A673 (cell line): ENCODE measurements at regions of chr16 and their contacts with region 1.

Region 1: DNA sequence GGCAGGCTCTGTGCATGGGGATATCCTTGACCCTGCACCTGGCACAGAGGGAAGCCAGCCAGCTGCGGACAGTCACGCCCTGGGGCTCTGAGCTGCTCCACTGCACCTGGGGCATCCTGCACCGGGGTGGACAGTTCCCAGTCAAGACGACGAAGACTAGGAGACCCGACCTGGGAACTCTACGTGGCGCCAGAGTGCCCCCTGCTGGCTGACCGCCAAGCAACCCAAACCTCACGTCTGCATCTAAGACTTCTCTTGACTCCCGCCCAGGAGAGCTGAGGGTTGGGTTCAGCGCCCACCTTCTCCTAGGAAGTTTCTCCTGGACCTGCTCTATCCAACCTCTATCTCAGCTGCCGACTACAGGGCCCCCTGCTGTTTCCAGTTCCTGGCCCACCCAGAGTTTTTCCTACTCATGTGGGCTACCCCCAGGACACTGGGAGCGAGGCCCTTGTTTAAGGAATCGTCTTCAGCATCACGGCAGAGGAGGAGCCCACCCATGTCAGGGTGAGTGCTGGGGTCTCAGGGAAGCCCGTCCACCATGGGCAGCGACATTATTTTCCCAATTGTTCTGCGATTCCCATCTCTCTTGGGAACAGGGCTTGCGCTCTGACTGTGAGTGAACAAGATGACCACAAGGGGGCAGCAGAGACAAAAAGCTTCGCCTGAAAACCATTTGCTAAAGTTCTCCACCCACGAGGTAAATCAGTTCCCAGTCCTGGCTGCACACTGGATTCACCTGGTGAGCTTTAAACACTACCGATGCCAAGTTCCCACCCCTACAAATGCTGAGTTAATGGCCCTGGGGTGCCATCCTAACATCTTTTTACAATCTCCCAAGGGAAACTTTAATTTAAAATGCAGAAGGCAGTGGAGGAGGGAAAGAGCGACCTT is 29.3 kb downstream of the TLE7 start:
- DNase-seq: peak; percentile 83
- H3K4me3 ChIP-seq: no peak overlapping the region
- H3K27ac ChIP-seq: no peak overlapping the region
- H3K4me1 ChIP-seq: no peaks in the 10 kb centered on the region
- H3K27me3 ChIP-seq: peaks cover 44% of the 10 kb centered on the region
- CTCF ChIP-seq: peak; percentile 84

Region 2: GRCh38 chr16:69596801-69597200 is 1815.7 kb before region 1 on chr16:
- CTCF ChIA-PET with region 1: no interaction called
- POLR2A ChIA-PET with region 1: interaction called, 14 read pairs
- intact Hi-C with region 1: no loop called
- DNase-seq: no peak
- H3K4me3 ChIP-seq: no peak overlapping the region
- H3K27ac ChIP-seq: no peak overlapping the region
- H3K4me1 ChIP-seq: peaks cover 15% of the 10 kb centered on the region
- H3K27me3 ChIP-seq: no peaks in the 10 kb centered on the region
- CTCF ChIP-seq: no peak

Region 3: GRCh38 chr16:71499775-71500364 is 87.4 kb after region 1 on chr16:
- CTCF ChIA-PET with region 1: interaction called, 11 read pairs
- POLR2A ChIA-PET with region 1: no interaction called
- intact Hi-C with region 1: loop called (anchors 1 kb)
- DNase-seq: peak; percentile 67
- H3K4me3 ChIP-seq: no peak overlapping the region
- H3K27ac ChIP-seq: no peak overlapping the region
- H3K4me1 ChIP-seq: no peaks in the 10 kb centered on the region
- H3K27me3 ChIP-seq: peaks cover 7% of the 10 kb centered on the region
- CTCF ChIP-seq: peak; percentile 78

Region 4: DNA sequence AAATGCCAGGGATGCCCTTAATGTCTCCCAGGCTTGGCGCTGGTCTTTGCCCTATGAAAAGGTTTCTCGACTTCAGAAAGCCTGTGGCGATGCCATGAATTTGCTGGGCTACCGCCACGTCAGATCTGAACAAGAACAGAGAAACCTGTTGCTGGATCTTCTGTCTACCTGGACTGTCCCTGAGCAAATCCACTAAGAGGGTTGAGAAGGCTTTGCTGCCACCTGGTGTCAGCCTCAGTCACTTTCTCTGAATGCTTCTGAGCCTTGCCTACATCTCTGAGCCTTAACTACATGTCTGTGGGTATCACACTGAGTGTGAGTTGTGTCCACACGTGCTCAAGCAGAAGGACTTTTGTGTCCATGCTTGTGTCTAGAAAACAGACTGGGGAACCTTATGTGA is 125.1 kb after region 1 on chr16:
- CTCF ChIA-PET with region 1: no interaction called
- POLR2A ChIA-PET with region 1: no interaction called
- intact Hi-C with region 1: loop called (anchors 2 kb)
- DNase-seq: peak; percentile 43
- H3K4me3 ChIP-seq: no peak overlapping the region
- H3K27ac ChIP-seq: no peak overlapping the region
- H3K4me1 ChIP-seq: no peaks in the 10 kb centered on the region
- H3K27me3 ChIP-seq: peaks cover 23% of the 10 kb centered on the region
- CTCF ChIP-seq: peak; percentile 71

Region 5: DNA sequence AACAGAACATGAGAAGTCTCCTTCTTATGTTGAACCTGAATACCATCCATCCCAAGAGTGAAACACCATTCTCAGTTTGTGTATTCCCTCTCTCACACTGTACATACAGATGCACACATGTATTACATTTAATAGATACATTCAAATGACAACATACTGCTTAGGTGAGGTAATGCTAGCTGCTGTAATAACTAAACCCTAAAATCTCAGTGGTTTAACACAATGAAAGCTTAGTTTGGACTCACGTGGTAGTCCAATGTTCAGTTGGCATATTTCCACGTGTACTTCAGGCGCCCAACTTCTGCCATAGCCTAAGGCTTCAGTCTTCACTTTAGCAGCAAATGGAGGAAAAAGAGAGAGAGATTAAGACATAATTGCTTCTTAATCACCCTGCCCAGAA is 1110.6 kb after region 1 on chr16:
- CTCF ChIA-PET with region 1: no interaction called
- POLR2A ChIA-PET with region 1: no interaction called
- intact Hi-C with region 1: no loop called
- DNase-seq: no peak
- H3K4me3 ChIP-seq: no peak overlapping the region
- H3K27ac ChIP-seq: no peak overlapping the region
- H3K4me1 ChIP-seq: no peaks in the 10 kb centered on the region
- H3K27me3 ChIP-seq: no peaks in the 10 kb centered on the region
- CTCF ChIP-seq: no peak